ENCODE measurements at regions of chr15 and their contacts with region 1.

Region 1: DNA sequence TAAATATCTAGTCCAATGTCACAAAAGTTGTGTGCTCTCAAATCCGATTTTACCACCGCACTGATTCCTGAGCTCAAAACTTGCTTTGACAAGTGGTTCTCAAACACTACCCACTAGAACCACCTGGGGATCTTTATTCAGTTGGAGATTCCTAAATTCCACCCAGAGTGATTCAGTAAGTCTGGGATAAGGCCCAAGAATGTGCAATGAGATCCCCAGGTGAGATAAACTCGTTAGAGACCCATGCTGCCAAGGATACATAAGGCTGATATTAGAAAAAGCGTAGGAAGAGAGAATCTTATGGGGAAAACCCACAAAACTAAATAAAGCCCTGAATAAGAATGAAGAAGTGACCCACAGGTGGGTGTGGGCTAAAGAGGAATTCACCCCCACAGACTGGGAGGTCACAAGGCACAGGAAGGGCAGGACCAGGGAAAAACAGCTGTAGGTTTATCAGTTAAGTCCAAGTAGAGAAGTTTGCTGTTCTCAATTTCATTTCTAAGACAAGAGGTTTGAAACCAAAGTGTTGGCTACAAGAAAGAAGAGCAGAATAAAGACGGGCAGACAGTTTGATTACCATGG is 11.5 kb upstream of the RPS17 start:
- DNase-seq: no peak
- H3K4me3 ChIP-seq: no peak overlapping the region
- H3K27ac ChIP-seq: no peak overlapping the region
- H3K4me1 ChIP-seq: no peaks in the 10 kb centered on the region
- H3K27me3 ChIP-seq: peaks cover 37% of the 10 kb centered on the region
- CTCF ChIP-seq: no peak

Region 2: DNA sequence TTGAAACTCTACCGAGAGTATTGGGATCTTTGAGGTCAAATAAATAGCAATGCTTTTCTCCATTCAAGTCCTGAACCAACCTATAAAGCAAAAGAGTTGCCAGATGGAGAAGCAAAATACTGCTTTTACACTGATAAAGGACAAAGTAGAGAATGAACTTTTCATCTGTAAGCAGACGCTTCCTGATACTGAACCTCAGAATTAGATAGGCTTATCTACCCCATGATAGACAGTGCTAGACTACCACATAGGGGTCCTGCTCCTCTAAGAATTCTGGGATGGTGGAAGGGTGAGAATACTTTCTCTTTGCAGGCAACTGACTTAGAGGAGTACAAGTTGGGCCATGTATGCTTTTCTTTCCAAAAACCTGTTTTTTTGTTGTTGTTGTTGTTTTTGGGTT is 279.6 kb before region 1 on chr15:
- CTCF ChIA-PET with region 1: no interaction called
- POLR2A ChIA-PET with region 1: no interaction called
- intact Hi-C with region 1: no loop called
- DNase-seq: no peak
- H3K4me3 ChIP-seq: no peak overlapping the region
- H3K27ac ChIP-seq: no peak overlapping the region
- H3K4me1 ChIP-seq: no peaks in the 10 kb centered on the region
- H3K27me3 ChIP-seq: no peaks in the 10 kb centered on the region
- CTCF ChIP-seq: no peak

Region 3: GRCh38 chr15:82540055-82540983 is 11.4 kb before region 1 on chr15 and contains the start of gene RPS17:
- CTCF ChIA-PET with region 1: no interaction called
- POLR2A ChIA-PET with region 1: interaction called, 10 read pairs
- intact Hi-C with region 1: no loop called
- DNase-seq: peak; percentile 97
- H3K4me3 ChIP-seq: peak within 1 kb of the TSS; percentile 76
- H3K27ac ChIP-seq: peak within 1 kb of the TSS; percentile 91
- H3K4me1 ChIP-seq: peaks cover 15% of the 10 kb centered on the region
- H3K27me3 ChIP-seq: no peaks in the 10 kb centered on the region
- CTCF ChIP-seq: peak; percentile 99
- total RNA-seq, gene RPS17: 1,732 and 1,749 TPM in 2 replicates

Region 4: GRCh38 chr15:82749951-82750830 is 198.4 kb after region 1 on chr15:
- CTCF ChIA-PET with region 1: no interaction called
- POLR2A ChIA-PET with region 1: no interaction called
- intact Hi-C with region 1: no loop called
- DNase-seq: peak; percentile 96
- H3K4me3 ChIP-seq: peak overlapping the region; percentile 82
- H3K27ac ChIP-seq: peak overlapping the region; percentile 78
- H3K4me1 ChIP-seq: peaks cover 10% of the 10 kb centered on the region
- H3K27me3 ChIP-seq: no peaks in the 10 kb centered on the region
- CTCF ChIP-seq: no peak

Measured in A673 (cell line).